CD4-positive, alpha-beta memory T cell (primary cell): ENCODE measurements at regions of chr10 and their contacts with region 1.

Region 1: DNA sequence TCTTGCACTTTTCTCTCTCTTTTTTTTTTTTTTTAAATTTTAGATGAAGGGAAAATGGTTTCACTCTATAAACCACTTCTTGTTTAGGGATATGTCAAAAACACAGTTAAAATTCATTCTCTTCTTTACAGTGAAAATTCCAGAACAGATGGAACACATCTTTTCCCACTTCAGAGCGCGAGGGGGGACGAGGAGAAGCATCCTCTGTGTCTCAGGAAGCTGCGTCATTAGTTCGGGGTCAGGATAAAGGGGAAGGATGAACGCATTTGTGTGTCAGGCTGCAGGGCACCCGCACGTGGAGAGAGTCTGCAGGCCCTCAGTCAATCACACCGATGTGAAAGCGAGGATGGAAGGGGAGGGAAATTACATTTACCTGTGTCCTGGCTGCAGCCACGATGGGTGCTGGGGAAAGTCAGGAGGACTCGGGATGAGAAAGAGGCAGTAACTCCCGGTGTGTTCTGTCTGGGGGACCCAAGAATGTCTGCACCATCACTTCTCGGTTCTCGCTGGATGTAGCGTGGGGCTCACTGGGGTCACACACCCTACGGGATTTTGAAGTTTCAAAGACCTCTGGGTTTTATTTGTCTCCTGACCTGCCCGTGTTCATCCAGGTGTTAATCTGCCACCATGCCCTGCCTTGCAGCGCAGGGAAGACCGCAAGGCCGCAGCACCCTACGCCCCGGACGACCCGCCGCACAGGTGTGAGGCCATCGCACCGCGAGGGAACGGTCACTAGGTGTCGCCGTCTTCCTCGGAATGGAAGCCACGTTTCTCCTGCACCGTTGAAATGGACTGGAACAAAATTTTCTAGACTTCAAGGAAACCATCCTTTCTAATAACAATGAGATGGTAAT is 66.7 kb upstream of the PITRM1 start:
- DNase-seq: peak; percentile 62 to 73 (median 64)
- H3K4me3 ChIP-seq: no peak overlapping the region
- H3K4me3 Mint-ChIP-seq: peak overlapping the region in 2 of 8 donors; percentile 45 to 77
- H3K27ac ChIP-seq: no peak overlapping the region
- H3K27ac Mint-ChIP-seq: peak overlapping the region in 3 of 7 donors; percentile 61 to 84 (median 67)
- H3K4me1 ChIP-seq: no peaks in the 10 kb centered on the region
- H3K4me1 Mint-ChIP-seq: peaks cover 0 to 9% (median 5%) of the 10 kb centered on the region in 4 donors
- H3K27me3 ChIP-seq: no peaks in the 10 kb centered on the region
- H3K27me3 Mint-ChIP-seq: peaks cover 0 to 2% of the 10 kb centered on the region in 2 donors

Region 2: DNA sequence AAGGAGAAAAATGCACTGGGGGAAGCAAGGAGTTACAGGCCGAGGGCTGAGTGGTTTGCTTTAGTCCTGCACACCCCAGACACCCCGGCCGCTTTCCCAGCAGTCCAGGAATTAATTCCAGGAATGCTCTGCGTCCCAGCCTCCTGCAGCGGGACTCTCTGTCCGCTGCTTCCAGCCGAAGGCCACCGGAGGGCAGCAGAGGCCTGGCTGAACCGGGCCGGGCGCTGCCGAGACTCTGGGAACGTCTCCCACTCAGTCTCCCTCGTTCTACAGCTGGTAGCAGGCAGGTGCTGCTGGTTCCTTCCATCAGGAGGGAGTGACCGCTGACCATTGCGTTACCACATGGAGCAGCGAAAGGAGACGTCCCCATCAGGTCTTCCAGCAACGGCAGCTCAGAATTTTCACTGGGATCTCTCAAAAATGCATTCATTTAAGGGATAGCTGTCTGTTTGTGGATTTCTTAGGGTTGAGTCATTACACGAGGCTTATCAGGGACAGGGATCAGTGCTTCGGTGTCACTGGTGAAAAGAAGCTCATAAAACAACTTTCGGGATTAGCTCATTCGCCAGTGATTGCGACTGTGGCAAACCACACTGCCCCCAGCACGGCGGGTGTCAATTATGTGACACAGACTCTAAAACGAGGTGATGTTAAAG is 41.8 kb before region 1 on chr10:
- CTCF ChIA-PET with region 1: interaction called, 7 read pairs
- POLR2A ChIA-PET with region 1: no interaction called
- intact Hi-C with region 1: loop called (anchors 1 kb)
- DNase-seq: peak; percentile 46 to 87 (median 53)
- H3K4me3 ChIP-seq: peak overlapping the region; percentile 24 to 49
- H3K4me3 Mint-ChIP-seq: peak overlapping the region; percentile 66 to 88 (median 77)
- H3K27ac ChIP-seq: no peak overlapping the region
- H3K27ac Mint-ChIP-seq: peak overlapping the region in 4 of 7 donors; percentile 11 to 81 (median 49)
- H3K4me1 ChIP-seq: peaks cover 18% of the 10 kb centered on the region
- H3K4me1 Mint-ChIP-seq: peaks cover 8 to 25% (median 13%) of the 10 kb centered on the region in 4 donors
- H3K27me3 ChIP-seq: peaks cover 7% of the 10 kb centered on the region
- H3K27me3 Mint-ChIP-seq: peaks cover 29 to 31% of the 10 kb centered on the region in 2 donors

Region 3: GRCh38 chr10:3452173-3452626 is 212.9 kb after region 1 on chr10:
- CTCF ChIA-PET with region 1: no interaction called
- POLR2A ChIA-PET with region 1: no interaction called
- intact Hi-C with region 1: loop called (anchors 10 kb)
- DNase-seq: no peak
- H3K4me3 ChIP-seq: no peak overlapping the region
- H3K4me3 Mint-ChIP-seq: no peak overlapping the region
- H3K27ac ChIP-seq: no peak overlapping the region
- H3K27ac Mint-ChIP-seq: peak overlapping the region in 3 of 7 donors; percentile 19 to 67 (median 43)
- H3K4me1 ChIP-seq: peaks cover 10% of the 10 kb centered on the region
- H3K4me1 Mint-ChIP-seq: peaks cover 8 to 26% (median 9%) of the 10 kb centered on the region in 4 donors
- H3K27me3 ChIP-seq: no peaks in the 10 kb centered on the region
- H3K27me3 Mint-ChIP-seq: peaks cover 12 to 13% of the 10 kb centered on the region in 2 donors

Region 4: GRCh38 chr10:4767033-4767814 is 1527.9 kb after region 1 on chr10:
- CTCF ChIA-PET with region 1: interaction called, 9 read pairs
- POLR2A ChIA-PET with region 1: no interaction called
- intact Hi-C with region 1: loop called (anchors 1 kb)
- DNase-seq: peak in 4 of 5 donors; percentile 18 to 33 (median 32)
- H3K4me3 ChIP-seq: no peak overlapping the region
- H3K4me3 Mint-ChIP-seq: no peak overlapping the region
- H3K27ac ChIP-seq: no peak overlapping the region
- H3K27ac Mint-ChIP-seq: no peak overlapping the region
- H3K4me1 ChIP-seq: no peaks in the 10 kb centered on the region
- H3K4me1 Mint-ChIP-seq: no peaks in the 10 kb centered on the region
- H3K27me3 ChIP-seq: no peaks in the 10 kb centered on the region
- H3K27me3 Mint-ChIP-seq: peaks cover 8 to 12% of the 10 kb centered on the region in 2 donors